ENCODE measurements at regions of chr6 and their contacts with region 1.

Region 1: GRCh38 chr6:30836431-30836866 is 47.9 kb upstream of the DDR1 start:
- DNase-seq: no peak
- CTCF ChIP-seq: no peak

Region 2: GRCh38 chr6:30877419-30878371 is 41.2 kb after region 1 on chr6:
- CTCF ChIA-PET with region 1: interaction called, 15 read pairs
- POLR2A ChIA-PET with region 1: no interaction called
- DNase-seq: peak; percentile 73
- CTCF ChIP-seq: peak; percentile 82

Measured in GM10248 (cell line).